Kidney (tissue), 22 donors: ENCODE measurements at regions of chrX and their contacts with region 1.

Region 1: DNA sequence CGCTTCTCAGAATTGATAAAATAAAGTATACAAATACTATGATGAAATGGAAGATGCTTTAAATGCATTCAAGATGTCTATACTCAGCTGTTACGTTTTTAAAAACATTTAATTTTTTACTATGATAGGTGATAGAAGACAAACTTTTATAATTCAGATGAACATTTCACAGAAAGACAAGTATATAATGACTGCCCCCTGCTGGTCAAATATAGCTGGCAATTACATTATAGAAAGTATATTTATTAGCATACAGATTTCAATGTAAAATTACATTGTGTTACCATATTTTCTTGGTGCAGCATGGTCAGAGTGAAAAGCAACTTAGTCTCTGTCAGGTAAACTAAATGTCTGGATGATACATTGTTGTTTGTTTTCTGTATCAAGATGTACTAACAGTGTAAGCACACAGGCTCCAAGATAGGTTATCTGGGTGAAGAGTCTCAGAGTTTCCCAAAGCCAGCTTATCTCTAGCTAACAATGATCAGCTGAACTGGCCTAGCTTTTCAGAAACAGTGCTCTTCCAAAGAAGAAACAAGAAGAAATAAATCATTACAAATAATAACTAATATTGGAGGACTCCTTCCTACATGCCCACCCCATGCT is 54.1 kb downstream of the SRPX start:
- DNase-seq: peak in 2 of 5 donors; percentile 32 to 39
- H3K4me3 ChIP-seq: no peak overlapping the region
- H3K27ac ChIP-seq: no peak overlapping the region
- H3K4me1 ChIP-seq: peaks cover 0 to 3% (median 0%) of the 10 kb centered on the region in 3 donors
- H3K27me3 ChIP-seq: peaks cover 1% of the 10 kb centered on the region
- CTCF ChIP-seq: peak; percentile 53

Region 2: GRCh38 chrX:37926700-37927099 is 239.9 kb before region 1 on chrX:
- intact Hi-C with region 1: loop called (anchors 5 kb)
- DNase-seq: peak in 2 of 5 donors; percentile 32 to 53
- H3K4me3 ChIP-seq: no peak overlapping the region
- H3K27ac ChIP-seq: no peak overlapping the region
- H3K4me1 ChIP-seq: no peaks in the 10 kb centered on the region
- H3K27me3 ChIP-seq: no peaks in the 10 kb centered on the region
- CTCF ChIP-seq: peak; percentile 46